ENCODE measurements at regions of chr1 and their contacts with region 1.

Region 1: GRCh38 chr1:32933742-32934322 is 30.8 kb downstream of the RNF19B start:
- DNase-seq: peak; percentile 92
- H3K4me3 ChIP-seq: no peak overlapping the region
- H3K27ac ChIP-seq: peak overlapping the region; percentile 94
- H3K4me1 ChIP-seq: peaks cover 15% of the 10 kb centered on the region
- H3K27me3 ChIP-seq: no peaks in the 10 kb centered on the region
- CTCF ChIP-seq: no peak

Region 2: DNA sequence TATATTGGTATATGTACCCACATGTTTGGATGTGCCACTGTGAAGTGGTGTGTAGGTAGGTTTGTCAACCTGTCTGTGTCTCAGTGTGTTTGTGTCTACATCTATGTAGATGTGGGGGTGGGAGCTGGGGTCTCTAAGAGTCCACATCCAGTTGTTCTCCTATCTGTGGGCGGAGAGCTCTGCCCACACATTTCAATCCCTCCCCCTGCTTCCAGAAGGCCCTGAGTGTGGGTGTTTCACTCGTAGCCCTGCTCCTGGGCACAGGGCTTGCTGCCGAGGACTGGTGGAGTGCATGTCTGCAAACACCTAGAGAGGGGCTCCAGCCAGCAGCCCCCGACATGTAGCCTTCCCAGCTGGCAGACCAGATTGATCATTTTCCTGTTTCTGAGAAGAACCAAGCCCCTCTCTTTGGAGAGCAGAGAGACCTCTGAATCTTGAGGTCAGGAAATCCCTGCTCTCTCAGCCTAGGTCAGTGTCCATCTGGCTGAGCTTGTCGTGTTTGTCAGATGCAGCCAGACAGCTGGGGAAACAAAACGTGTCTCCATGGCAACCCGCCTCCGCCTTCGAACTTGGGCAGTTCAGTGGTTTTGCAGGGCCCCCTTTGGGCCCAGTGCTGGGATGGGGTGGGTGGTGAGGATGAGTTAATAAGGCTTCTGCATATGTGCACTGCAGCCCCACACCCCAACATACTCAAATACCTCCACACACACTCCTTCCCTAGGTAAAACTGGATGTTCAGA is 200.1 kb before region 1 on chr1:
- intact Hi-C with region 1: no loop called
- DNase-seq: no peak
- H3K4me3 ChIP-seq: no peak overlapping the region
- H3K27ac ChIP-seq: no peak overlapping the region
- H3K4me1 ChIP-seq: peaks cover 6% of the 10 kb centered on the region
- H3K27me3 ChIP-seq: no peaks in the 10 kb centered on the region
- CTCF ChIP-seq: no peak

Region 3: DNA sequence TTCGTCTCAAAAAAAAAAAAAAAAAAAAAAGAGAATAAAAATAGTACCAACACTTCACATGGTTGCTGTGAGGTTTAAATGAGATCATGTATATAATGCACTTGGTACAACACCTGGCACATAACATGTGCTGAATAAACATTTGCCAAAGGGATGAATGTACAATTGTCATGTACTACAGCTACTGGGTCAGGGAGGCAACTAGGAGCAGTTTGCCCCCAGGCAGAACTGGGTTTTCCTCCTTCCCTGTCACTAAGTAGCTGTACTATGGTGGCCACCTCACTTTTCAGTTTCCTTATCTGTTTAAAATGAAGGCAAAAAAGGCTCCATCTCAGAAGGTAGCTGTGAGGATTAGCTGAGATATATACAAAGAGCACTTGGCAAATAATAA is 91.3 kb after region 1 on chr1:
- intact Hi-C with region 1: no loop called
- DNase-seq: no peak
- H3K4me3 ChIP-seq: no peak overlapping the region
- H3K27ac ChIP-seq: peak overlapping the region; percentile 57
- H3K4me1 ChIP-seq: no peaks in the 10 kb centered on the region
- H3K27me3 ChIP-seq: no peaks in the 10 kb centered on the region
- CTCF ChIP-seq: no peak

Region 4: DNA sequence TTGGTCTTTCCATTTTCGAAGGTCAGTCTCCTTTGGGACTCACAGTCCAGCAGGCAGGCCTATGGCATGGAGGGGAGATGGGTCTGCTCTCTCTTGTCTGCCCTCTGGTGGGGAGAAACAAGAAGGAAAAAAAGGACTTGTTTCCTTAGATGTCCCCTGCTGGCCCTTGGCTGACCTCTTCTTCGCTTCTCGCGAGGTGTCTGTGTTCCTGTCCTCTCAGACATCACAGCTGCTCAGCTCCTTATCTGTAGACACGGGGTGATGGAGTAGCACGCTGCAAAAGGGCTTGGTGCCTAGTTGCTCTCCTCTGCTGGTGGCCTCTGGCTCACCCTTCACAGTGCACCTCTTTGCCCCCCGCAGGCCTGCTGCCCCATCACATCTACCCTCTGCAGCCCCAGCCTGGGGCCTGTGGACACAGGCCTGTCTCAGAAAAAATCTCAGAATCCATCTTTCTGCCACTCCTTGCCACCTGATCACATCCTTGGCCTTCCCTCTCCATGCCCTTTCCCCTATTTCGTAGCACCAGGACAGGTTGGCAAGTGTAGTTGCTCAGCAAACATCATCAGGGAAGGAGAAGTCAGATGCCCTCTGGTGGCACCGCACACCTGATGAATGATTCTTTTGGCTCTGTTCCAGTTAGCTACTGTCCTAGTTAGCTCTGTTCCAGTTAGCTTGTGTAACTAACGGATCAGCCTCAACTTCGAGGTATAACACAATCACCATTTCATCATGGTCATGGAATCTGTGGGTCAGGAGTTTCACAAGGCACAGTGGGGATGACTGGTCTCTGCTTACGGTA is 121.6 kb after region 1 on chr1:
- intact Hi-C with region 1: loop called (anchors 2 kb)
- DNase-seq: peak; percentile 78
- H3K4me3 ChIP-seq: no peak overlapping the region
- H3K27ac ChIP-seq: peak overlapping the region; percentile 64
- H3K4me1 ChIP-seq: no peaks in the 10 kb centered on the region
- H3K27me3 ChIP-seq: no peaks in the 10 kb centered on the region
- CTCF ChIP-seq: peak; percentile 62